ENCODE measurements at regions of chr1 and their contacts with region 1.

Region 1: GRCh38 chr1:7646981-7647901 is 123.9 kb upstream of the VAMP3 start:
- DNase-seq: peak; percentile 73 to 84
- ATAC-seq: peak; percentile 45 to 75 (median 64)
- H3K4me3 ChIP-seq: no peak overlapping the region
- H3K27ac ChIP-seq: no peak overlapping the region
- H3K4me1 ChIP-seq: peaks cover 5% of the 10 kb centered on the region
- H3K27me3 ChIP-seq: no peaks in the 10 kb centered on the region
- CTCF ChIP-seq: peak; percentile 92

Region 2: GRCh38 chr1:6730473-6730872 is 916.8 kb before region 1 on chr1:
- intact Hi-C with region 1: loop called in 1 of 2 experiments (anchors 10 kb)
- DNase-seq: no peak
- ATAC-seq: no peak
- H3K4me3 ChIP-seq: no peak overlapping the region
- H3K27ac ChIP-seq: no peak overlapping the region
- H3K4me1 ChIP-seq: peaks cover 3% of the 10 kb centered on the region
- H3K27me3 ChIP-seq: no peaks in the 10 kb centered on the region
- CTCF ChIP-seq: no peak

Region 3: DNA sequence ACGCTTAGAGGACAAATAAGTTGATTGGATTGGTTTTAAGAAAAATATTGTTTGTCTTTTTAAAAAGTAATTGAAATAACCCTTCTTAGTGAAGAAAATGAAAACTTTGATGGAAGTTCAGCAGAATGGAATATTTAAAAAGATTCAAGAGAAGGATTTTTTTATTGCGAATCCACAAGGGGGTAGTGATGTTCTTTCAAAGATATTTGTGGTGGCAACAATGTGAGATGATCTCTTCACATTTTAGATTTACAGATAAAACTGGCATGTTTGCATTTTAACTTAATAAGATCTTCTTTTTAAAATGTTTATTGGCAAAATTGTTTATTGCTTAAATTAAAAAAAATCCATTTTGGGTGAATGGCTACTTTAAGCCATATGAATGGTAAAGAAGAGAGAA is 853.1 kb before region 1 on chr1:
- intact Hi-C with region 1: loop called in 1 of 2 experiments (anchors 5 kb)
- DNase-seq: no peak
- ATAC-seq: peak in 1 of 4 donors; percentile 69
- H3K4me3 ChIP-seq: no peak overlapping the region
- H3K27ac ChIP-seq: no peak overlapping the region
- H3K4me1 ChIP-seq: peaks cover 27% of the 10 kb centered on the region
- H3K27me3 ChIP-seq: no peaks in the 10 kb centered on the region
- CTCF ChIP-seq: peak; percentile 53

Region 4: DNA sequence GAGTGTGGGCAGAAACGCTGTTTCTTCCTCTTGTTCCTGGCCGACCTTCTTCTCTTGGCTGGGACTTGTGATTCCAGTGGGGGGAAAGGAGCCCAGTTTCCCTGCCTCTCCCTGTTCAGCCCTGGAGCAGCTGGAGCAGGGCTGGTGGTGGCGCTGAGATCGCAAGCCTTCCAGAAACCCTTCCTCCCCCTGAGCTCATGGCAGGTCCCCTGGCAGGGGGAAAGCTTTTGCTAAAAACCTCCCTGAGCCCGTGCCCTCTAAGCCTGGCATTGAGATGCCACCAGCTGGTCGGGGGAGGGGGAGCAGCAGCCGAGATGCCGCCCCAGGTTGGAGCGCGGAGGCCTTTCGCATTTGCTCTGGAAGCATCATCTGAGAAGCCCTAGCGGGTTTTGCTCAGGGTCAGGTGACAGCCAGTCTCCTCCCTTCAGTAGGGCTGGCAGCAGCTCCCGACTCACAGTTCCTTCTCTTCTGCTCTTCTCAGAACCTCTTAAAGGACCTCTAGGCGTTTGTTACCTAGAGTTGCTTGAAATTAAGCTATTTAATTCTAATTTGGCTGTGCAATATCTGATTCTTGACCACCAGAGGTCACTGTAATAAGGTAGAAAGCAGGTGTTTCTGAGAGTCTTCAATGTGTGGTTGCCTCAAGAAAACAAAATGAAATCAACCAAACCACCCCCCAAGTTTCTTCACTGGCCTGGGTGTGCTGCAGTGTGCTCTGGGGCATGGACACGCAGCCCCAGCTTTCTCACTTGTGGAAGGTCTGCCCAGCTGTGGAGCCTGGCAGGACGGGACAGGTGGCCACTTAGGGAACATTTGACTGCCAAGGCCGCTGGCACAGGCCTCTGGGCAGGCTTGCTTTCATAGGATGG is 604.7 kb before region 1 on chr1:
- intact Hi-C with region 1: loop called (anchors 10 kb)
- DNase-seq: no peak
- ATAC-seq: peak in 2 of 4 donors; percentile 64 to 65
- H3K4me3 ChIP-seq: peak overlapping the region; percentile 11
- H3K27ac ChIP-seq: no peak overlapping the region
- H3K4me1 ChIP-seq: peaks cover 7% of the 10 kb centered on the region
- H3K27me3 ChIP-seq: peaks cover 0 to 14% (median 4%) of the 10 kb centered on the region in 3 donors
- CTCF ChIP-seq: peak; percentile 50

Region 5: DNA sequence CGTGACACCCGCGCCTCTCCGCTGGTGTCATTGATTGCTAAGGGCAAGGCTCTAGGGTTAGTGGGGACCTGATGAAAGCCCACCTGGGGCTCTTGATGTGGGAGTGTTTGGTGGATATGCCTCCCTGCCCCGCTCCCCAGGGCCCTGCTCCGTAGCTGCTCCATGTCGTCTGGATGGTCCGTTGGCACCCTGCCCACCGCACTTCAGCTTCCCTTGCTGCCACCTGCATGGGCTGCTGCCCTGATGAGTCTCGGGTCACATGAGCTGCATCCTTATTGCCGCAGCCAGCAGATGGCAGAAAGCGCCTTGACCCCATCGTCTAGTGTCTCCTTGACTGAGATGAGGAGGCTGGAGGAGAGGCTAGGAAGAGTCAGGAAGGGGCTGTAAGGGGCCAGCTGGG is 422.6 kb before region 1 on chr1:
- intact Hi-C with region 1: loop called (anchors 2 to 10 kb)
- DNase-seq: no peak
- ATAC-seq: peak in 1 of 4 donors; percentile 60
- H3K4me3 ChIP-seq: no peak overlapping the region
- H3K27ac ChIP-seq: no peak overlapping the region
- H3K4me1 ChIP-seq: no peaks in the 10 kb centered on the region
- H3K27me3 ChIP-seq: no peaks in the 10 kb centered on the region
- CTCF ChIP-seq: peak; percentile 36

Region 6: GRCh38 chr1:7454052-7454815 is 193.0 kb before region 1 on chr1:
- intact Hi-C with region 1: loop called (anchors 2 to 10 kb)
- DNase-seq: no peak
- ATAC-seq: peak in 1 of 4 donors; percentile 58
- H3K4me3 ChIP-seq: no peak overlapping the region
- H3K27ac ChIP-seq: no peak overlapping the region
- H3K4me1 ChIP-seq: peaks cover 5% of the 10 kb centered on the region
- H3K27me3 ChIP-seq: no peaks in the 10 kb centered on the region
- CTCF ChIP-seq: peak; percentile 26